ENCODE measurements at regions of chr16 and their contacts with region 1.

Region 1: GRCh38 chr16:53714205-53715022 is 10.5 kb downstream of the FTO start:
- DNase-seq: no peak
- ATAC-seq: no peak
- H3K4me3 ChIP-seq: no peak overlapping the region
- H3K27ac ChIP-seq: no peak overlapping the region
- H3K4me1 ChIP-seq: 0 out of 2 replicates have a peak, but pooled peaks cover 2% of the 10 kb centered on the region
- H3K27me3 ChIP-seq: no peaks in the 10 kb centered on the region
- CTCF ChIP-seq: no peak
- POLR2A ChIP-seq: no peak
- RAD21 ChIP-seq: no peak

Region 2: GRCh38 chr16:53761962-53762721 is 47.7 kb after region 1 on chr16:
- CTCF ChIA-PET with region 1: no interaction called
- POLR2A ChIA-PET with region 1: no interaction called
- dilution Hi-C with region 1: no loop called
- in situ Hi-C with region 1: loop called (anchors 5 kb)
- intact Hi-C with region 1: no loop called
- DNase-seq: no peak
- ATAC-seq: peak; percentile 57
- H3K4me3 ChIP-seq: no peak overlapping the region
- H3K27ac ChIP-seq: no peak overlapping the region
- H3K4me1 ChIP-seq: 0 out of 2 replicates have a peak, but pooled peaks cover 2% of the 10 kb centered on the region
- H3K27me3 ChIP-seq: no peaks in the 10 kb centered on the region
- CTCF ChIP-seq: no peak
- POLR2A ChIP-seq: no peak
- RAD21 ChIP-seq: no peak

Measured in IMR-90 (cell line).